K562 (cell line): ENCODE measurements at regions of chr20 and their contacts with region 1.

Region 1: DNA sequence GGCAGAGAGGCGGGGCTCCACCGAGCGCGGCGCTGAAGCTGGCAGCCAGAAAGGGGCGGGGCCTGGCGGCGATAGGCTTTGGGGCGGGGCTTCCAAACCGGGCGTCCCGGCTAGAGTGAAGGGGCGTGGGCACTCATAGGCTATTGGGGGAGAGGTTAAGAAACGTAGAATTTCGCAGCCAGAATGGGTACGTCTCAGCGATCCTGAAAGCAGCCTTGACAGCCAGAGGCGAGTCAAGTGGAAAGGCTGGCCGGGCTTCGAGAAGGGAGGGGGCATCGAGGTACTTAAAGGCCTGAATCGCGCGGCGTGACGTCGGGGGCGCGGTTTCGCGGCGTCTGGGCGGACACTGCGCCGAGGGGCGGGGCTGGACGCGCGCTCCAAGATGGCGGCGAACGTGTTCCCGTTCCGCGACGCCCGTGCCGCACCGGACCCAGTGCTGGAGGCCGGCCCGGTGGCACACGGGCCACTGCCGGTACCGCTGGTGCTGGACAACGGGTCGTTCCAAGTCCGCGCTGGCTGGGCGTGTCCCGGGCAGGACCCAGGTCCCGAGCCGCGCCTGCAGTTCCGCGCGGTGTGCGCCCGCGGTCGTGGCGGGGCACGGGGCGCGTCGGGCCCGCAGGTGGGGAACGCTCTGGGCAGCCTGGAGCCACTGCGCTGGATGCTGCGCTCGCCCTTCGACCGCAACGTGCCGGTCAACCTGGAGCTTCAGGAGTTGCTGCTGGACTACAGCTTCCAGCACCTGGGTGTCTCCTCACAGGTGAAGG is at the start of gene ACTR5:
- DNase-seq: peak; percentile 91 to 97 (median 96)
- ATAC-seq: peak; percentile 95
- H3K4me3 ChIP-seq: peak within 1 kb of the TSS; percentile 89
- H3K27ac ChIP-seq: peak within 1 kb of the TSS; percentile 77
- H3K4me1 ChIP-seq: peaks cover 12 to 18% of the 10 kb centered on the region in 2 experiments; a peak in 4 of 5 replicates
- H3K27me3 ChIP-seq: no peaks in the 10 kb centered on the region
- CTCF ChIP-seq: no peak
- EP300 ChIP-seq: no peak
- POLR2A ChIP-seq: peak; percentile 82
- RAD21 ChIP-seq: no peak
- polyA plus RNA-seq, gene ACTR5: 0.93 to 1.8 TPM

Region 2: GRCh38 chr20:37053230-37053950 is 1694.9 kb before region 1 on chr20:
- CTCF ChIA-PET with region 1: no interaction called
- POLR2A ChIA-PET with region 1: no interaction called
- in situ Hi-C with region 1: no loop called
- intact Hi-C with region 1: no loop called
- DNase-seq: no peak
- ATAC-seq: no peak
- H3K4me3 ChIP-seq: no peak overlapping the region
- H3K27ac ChIP-seq: no peak overlapping the region
- H3K4me1 ChIP-seq: no peaks in the 10 kb centered on the region
- H3K27me3 ChIP-seq: no peaks in the 10 kb centered on the region
- CTCF ChIP-seq: no peak
- EP300 ChIP-seq: no peak
- POLR2A ChIP-seq: no peak
- RAD21 ChIP-seq: no peak

Region 3: DNA sequence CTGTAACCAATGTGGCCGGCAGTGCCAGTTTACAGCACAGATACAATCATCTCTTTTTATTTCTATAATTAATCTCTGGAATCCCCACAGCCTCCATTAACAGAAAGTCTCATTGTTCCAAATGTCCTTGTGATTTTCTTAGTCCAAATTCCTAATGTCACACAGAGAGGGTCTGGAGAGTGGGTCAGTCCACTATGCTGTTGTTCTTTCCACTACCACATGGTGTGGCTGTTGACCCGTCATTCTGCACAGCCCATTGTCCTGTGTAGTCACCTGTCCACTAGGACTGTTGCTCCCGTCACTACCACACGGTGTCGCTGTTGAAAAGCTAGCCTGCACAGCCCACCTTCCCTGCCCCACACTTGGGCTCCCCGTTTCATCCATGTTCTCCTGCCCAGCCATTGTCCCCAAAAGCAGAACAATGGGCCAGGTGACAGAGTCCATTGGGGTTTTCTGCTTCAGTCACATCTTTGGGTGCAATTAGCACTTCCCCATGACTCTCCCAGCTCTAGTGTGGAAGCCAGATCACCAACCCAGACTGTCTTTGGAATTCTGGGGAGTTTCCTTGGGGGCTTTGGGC is 410.6 kb before region 1 on chr20:
- CTCF ChIA-PET with region 1: interaction called, 11 read pairs
- POLR2A ChIA-PET with region 1: no interaction called
- in situ Hi-C with region 1: no loop called
- intact Hi-C with region 1: loop called (anchors 5 kb)
- DNase-seq: peak; percentile 82 to 89 (median 85)
- ATAC-seq: peak; percentile 99
- H3K4me3 ChIP-seq: no peak overlapping the region
- H3K27ac ChIP-seq: no peak overlapping the region
- H3K4me1 ChIP-seq: peaks cover 7 to 10% of the 10 kb centered on the region in 2 experiments; a peak in 3 of 5 replicates
- H3K27me3 ChIP-seq: peaks cover 13 to 30% of the 10 kb centered on the region in 2 experiments; a peak in 4 of 5 replicates
- CTCF ChIP-seq: peak; percentile 99 to 100 (median 99)
- EP300 ChIP-seq: no peak
- POLR2A ChIP-seq: no peak
- RAD21 ChIP-seq: peak; percentile 96 to 99

Region 4: GRCh38 chr20:38730989-38731737 is 17.1 kb before region 1 on chr20:
- CTCF ChIA-PET with region 1: interaction called, 8 read pairs
- POLR2A ChIA-PET with region 1: interaction called, 5 read pairs
- in situ Hi-C with region 1: no loop called
- intact Hi-C with region 1: loop called (anchors 2 kb)
- DNase-seq: peak; percentile 83 to 92 (median 89)
- ATAC-seq: peak; percentile 93
- H3K4me3 ChIP-seq: peak overlapping the region; percentile 37
- H3K27ac ChIP-seq: no peak overlapping the region
- H3K4me1 ChIP-seq: peaks cover 8 to 32% of the 10 kb centered on the region in 2 experiments; a peak in 4 of 5 replicates
- H3K27me3 ChIP-seq: peaks cover 22 to 60% of the 10 kb centered on the region in 2 experiments
- CTCF ChIP-seq: peak; percentile 86 to 97 (median 87)
- EP300 ChIP-seq: no peak
- POLR2A ChIP-seq: no peak
- RAD21 ChIP-seq: peak; percentile 69 to 86

Region 5: GRCh38 chr20:38805502-38805957 is 57.3 kb after region 1 on chr20 and contains the start of gene PPP1R16B:
- CTCF ChIA-PET with region 1: no interaction called
- POLR2A ChIA-PET with region 1: no interaction called
- in situ Hi-C with region 1: no loop called
- intact Hi-C with region 1: no loop called
- DNase-seq: peak; percentile 66 to 86 (median 80)
- ATAC-seq: peak; percentile 97
- H3K4me3 ChIP-seq: peak within 1 kb of the TSS; percentile 55
- H3K27ac ChIP-seq: peak within 1 kb of the TSS; percentile 78
- H3K4me1 ChIP-seq: peaks cover 10 to 27% of the 10 kb centered on the region in 2 experiments
- H3K27me3 ChIP-seq: peaks cover 0 to 10% of the 10 kb centered on the region in 2 experiments; a peak in 2 of 5 replicates
- CTCF ChIP-seq: no peak
- EP300 ChIP-seq: no peak
- POLR2A ChIP-seq: peak; percentile 62; the same call in 1 of the 2 replicates
- RAD21 ChIP-seq: no peak
- polyA plus RNA-seq, gene PPP1R16B: 1.5 to 2.3 TPM

Region 6: GRCh38 chr20:38962044-38962927 is 214.0 kb after region 1 on chr20 and contains the start of gene DHX35:
- CTCF ChIA-PET with region 1: no interaction called
- POLR2A ChIA-PET with region 1: interaction called, 4 read pairs
- in situ Hi-C with region 1: no loop called
- intact Hi-C with region 1: loop called (anchors 5 kb)
- DNase-seq: peak; percentile 98 to 99 (median 99)
- ATAC-seq: peak; percentile 97
- H3K4me3 ChIP-seq: peak within 1 kb of the TSS; percentile 92
- H3K27ac ChIP-seq: peak within 1 kb of the TSS; percentile 94
- H3K4me1 ChIP-seq: peaks cover 14 to 18% of the 10 kb centered on the region in 2 experiments; a peak in 4 of 5 replicates
- H3K27me3 ChIP-seq: no peaks in the 10 kb centered on the region
- CTCF ChIP-seq: peak; percentile 65 to 77 (median 71)
- EP300 ChIP-seq: no peak
- POLR2A ChIP-seq: peak; percentile 90
- RAD21 ChIP-seq: peak; percentile 71 to 80
- polyA plus RNA-seq, gene DHX35: 6.5 to 12.0 TPM